Caco-2 (cell line): ENCODE measurements at regions of chr2 and their contacts with region 1.

Region 1: DNA sequence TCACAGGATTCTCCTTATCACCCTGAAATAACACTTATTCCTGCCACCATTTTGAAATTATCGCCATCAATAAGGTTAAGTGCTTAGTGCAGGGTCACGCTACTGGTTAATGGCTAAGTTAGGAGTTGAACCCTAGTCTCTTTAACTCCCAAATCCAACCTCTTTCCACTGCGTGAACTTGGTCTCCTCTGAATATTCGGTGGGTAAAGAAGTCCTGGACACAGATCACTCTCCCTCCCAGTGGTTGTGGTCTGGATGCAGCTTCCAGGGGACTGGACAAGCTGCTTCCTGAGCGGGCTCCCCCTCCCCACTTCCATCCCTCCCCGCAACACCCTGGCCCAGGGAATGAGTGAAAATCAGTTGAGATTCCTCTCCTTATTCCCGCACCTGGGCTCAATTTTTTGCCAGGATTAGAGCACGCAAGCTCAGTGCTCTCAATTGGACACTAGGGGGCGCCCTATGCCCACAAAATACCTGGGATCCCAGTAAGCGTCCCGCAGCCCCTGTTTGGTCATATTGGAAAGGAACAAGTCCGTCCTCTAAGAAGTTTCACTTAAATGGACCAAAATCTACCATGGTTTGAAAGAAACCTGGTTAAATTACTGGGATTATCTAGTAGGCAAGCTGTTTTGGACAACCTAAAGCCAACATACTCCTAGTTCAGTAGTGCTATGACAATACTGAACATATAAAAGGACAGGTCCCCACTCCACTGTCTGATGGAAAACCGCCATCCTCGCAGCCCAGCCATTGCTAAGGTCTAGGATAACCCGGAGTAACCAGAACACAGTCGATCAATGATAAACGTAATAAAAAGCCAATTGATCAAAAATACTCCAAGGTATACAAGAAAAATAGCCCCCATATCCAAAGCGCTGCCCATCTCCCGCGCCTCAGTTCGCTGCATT is 40.4 kb downstream of the DHRS9 start:
- DNase-seq: peak; percentile 82 to 86
- H3K4me3 ChIP-seq: no peak overlapping the region
- H3K4me3 Mint-ChIP-seq: no peak overlapping the region
- H3K27ac Mint-ChIP-seq: no peak overlapping the region
- H3K4me1 ChIP-seq: peaks cover 5% of the 10 kb centered on the region; the same call in 1 of the 2 replicates
- H3K4me1 Mint-ChIP-seq: peaks cover 10% of the 10 kb centered on the region
- H3K27me3 ChIP-seq: no peaks in the 10 kb centered on the region; the same call in 1 of the 2 replicates
- H3K27me3 Mint-ChIP-seq: peaks cover 4% of the 10 kb centered on the region
- CTCF ChIP-seq: peak; percentile 89 to 94

Region 2: DNA sequence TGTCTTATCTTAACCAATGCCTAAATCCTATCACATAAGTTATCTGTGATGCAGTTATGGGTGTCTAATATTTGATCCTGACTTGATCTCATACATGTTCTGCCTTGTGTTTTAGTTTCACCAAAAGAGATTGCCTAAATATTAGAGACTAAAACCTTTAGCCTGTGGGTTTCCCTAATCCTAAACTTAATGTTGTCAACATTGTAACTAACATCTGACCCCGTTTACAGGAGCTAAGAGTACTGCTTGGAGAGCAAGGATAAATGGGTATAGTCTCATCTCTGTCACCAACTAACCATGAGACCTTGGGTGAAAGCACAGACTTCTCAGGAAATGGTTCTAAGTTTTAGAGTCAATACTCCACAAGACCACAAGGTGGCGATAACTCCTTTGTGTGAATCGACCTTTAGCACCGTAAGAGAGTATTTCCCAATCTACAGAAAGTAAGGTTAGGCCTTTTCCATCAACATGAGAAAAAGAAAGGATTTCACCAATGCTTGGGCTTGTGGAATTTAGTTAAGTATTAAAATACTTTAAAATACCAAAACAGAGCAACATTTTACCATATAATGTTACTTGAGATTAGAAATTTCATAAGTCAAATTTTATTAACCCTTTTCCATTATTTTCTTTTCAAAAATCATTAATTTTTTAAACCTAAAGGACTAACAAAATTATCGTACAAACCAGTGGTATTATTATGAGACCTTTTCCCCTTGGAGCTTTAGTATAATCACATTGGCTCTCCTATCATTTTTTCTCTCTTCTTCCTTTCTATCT is 148.1 kb before region 1 on chr2:
- CTCF ChIA-PET with region 1: no interaction called
- POLR2A ChIA-PET with region 1: no interaction called
- intact Hi-C with region 1: loop called (anchors 1 kb)
- DNase-seq: peak; percentile 40 to 73
- H3K4me3 ChIP-seq: no peak overlapping the region
- H3K4me3 Mint-ChIP-seq: no peak overlapping the region
- H3K27ac Mint-ChIP-seq: no peak overlapping the region
- H3K4me1 ChIP-seq: no peaks in the 10 kb centered on the region
- H3K4me1 Mint-ChIP-seq: no peaks in the 10 kb centered on the region
- H3K27me3 ChIP-seq: no peaks in the 10 kb centered on the region
- H3K27me3 Mint-ChIP-seq: peaks cover 3% of the 10 kb centered on the region
- CTCF ChIP-seq: peak; percentile 76 to 80

Region 3: DNA sequence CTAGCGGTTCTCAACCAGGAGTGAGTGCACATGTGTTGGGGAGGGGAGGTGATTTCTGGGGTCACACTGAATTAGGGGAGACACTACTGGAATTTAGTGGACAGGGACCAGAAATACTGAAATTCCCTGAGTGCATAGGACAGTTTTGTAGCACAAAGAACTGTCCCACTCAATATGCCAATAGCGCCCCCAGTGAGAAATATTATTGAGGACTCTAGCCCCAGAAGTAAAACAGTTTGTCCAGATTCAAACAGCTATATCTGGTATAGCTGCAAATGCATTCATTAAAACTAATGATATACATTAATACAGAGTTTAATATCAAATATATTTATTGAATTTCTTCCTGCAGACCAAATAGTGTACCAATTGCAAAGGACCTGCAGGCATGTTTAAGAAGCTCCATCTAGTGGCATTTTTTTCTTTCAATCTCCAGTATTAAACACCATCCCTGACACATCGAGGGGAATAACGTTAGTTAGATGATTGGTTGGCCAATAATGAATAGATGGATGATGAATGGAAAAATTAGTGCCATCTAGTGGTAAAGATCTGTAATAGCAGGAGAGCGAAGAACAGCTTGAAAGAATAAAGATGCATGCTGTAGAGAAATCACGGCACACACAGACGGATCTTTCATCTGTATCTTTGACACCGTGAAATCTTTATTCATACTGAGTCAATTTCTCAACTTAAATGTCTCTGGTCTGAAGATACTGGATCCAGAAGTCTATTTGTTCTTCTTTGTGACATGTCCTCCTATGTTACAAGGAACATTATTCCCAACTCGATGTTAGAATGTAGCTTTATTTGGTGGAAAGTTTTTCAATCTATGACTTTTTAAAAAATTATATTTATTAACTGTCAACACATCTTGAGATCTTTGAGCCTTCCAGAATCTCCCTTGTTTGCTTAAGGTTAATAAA is 22.1 kb after region 1 on chr2:
- CTCF ChIA-PET with region 1: interaction called, 28 read pairs
- POLR2A ChIA-PET with region 1: no interaction called
- intact Hi-C with region 1: loop called (anchors 1 kb)
- DNase-seq: peak in 1 of 2 experiments; percentile 39
- H3K4me3 ChIP-seq: no peak overlapping the region
- H3K4me3 Mint-ChIP-seq: no peak overlapping the region
- H3K27ac Mint-ChIP-seq: no peak overlapping the region
- H3K4me1 ChIP-seq: no peaks in the 10 kb centered on the region
- H3K4me1 Mint-ChIP-seq: no peaks in the 10 kb centered on the region
- H3K27me3 ChIP-seq: no peaks in the 10 kb centered on the region
- H3K27me3 Mint-ChIP-seq: no peaks in the 10 kb centered on the region
- CTCF ChIP-seq: peak; percentile 63 to 79

Region 4: DNA sequence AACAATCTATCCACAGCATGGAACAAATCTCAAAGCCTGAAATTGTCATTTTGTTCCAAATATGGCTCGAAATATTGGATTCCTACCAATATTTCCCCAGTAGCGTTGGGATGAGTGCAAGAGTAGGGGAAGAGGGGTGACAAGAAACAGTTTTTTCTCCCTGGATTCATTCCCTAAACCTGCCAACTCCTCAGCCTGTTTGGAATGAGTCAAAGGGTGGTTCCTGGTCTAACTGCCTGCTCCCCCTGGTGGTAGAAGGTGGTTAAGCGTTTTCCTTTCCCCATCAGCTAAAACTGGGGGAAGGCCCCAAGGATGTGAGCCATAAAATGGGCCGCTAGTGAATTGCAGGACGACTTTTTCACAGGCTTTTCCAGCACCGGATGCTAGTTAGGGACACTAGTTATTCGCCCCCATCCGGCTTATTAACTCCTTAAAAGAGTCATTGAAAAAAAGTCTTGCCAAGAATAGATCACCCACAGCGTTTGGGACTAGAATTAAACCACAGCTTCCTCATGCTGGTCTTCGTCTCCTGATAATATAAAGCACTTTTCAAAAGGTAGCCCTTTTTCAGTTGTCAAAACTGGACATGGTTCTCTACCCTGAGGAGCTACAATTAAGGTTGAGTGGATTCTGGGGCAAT is 32.1 kb after region 1 on chr2:
- CTCF ChIA-PET with region 1: interaction called, 13 read pairs
- POLR2A ChIA-PET with region 1: no interaction called
- intact Hi-C with region 1: loop called (anchors 1 kb)
- DNase-seq: peak; percentile 63 to 78
- H3K4me3 ChIP-seq: no peak overlapping the region
- H3K4me3 Mint-ChIP-seq: no peak overlapping the region
- H3K27ac Mint-ChIP-seq: peak overlapping the region; percentile 50
- H3K4me1 ChIP-seq: no peaks in the 10 kb centered on the region
- H3K4me1 Mint-ChIP-seq: no peaks in the 10 kb centered on the region
- H3K27me3 ChIP-seq: no peaks in the 10 kb centered on the region
- H3K27me3 Mint-ChIP-seq: no peaks in the 10 kb centered on the region
- CTCF ChIP-seq: peak; percentile 72 to 86

Region 5: DNA sequence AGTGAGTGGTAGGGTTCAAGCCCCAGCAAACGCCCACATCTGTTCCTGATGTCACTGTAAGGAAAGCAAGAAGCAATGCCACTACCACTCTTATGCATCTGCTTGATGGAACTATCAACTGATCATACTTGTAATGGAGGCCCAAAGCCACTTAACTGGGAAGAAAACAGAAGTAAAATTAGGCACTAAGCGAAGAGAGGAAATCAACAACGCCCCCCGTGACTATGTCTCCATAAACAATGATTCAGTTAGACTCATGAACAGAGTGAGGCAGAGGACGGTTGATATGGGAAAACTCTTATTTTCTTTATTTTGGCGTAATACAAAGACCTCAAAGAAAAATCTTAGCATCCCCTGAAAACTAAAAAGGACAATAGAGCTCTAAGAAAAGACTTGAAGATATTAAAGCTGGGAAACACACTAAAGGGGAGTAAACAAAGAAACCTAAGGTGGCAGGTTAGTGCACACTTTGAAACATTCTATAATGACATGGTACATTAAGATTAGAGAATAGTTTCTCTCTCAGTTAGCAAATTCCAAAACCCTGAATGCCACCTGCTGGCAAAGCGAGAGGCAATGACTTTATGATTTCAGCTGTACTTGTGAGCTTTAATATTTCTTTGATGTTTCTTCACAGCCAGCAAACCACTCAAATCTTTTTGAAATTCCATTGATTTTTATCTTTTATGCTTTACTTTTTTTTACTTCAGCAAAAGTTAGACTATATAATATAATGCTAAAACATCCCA is 166.1 kb after region 1 on chr2:
- CTCF ChIA-PET with region 1: interaction called, 5 read pairs
- POLR2A ChIA-PET with region 1: no interaction called
- intact Hi-C with region 1: loop called (anchors 5 kb)
- DNase-seq: no peak
- H3K4me3 ChIP-seq: no peak overlapping the region
- H3K4me3 Mint-ChIP-seq: no peak overlapping the region
- H3K27ac Mint-ChIP-seq: no peak overlapping the region
- H3K4me1 ChIP-seq: no peaks in the 10 kb centered on the region
- H3K4me1 Mint-ChIP-seq: peaks cover 9% of the 10 kb centered on the region
- H3K27me3 ChIP-seq: no peaks in the 10 kb centered on the region
- H3K27me3 Mint-ChIP-seq: no peaks in the 10 kb centered on the region
- CTCF ChIP-seq: peak; percentile 21 to 52